MCF 10A (cell line): ENCODE measurements at regions of chr12 and their contacts with region 1.

Region 1: GRCh38 chr12:131737142-131737827 is 26.4 kb downstream of the SFSWAP start:
- DNase-seq: peak; percentile 81
- H3K4me3 Mint-ChIP-seq: peak overlapping the region; percentile 61
- H3K27ac Mint-ChIP-seq: peak overlapping the region; percentile 65
- H3K4me1 Mint-ChIP-seq: peaks cover 10% of the 10 kb centered on the region
- H3K27me3 Mint-ChIP-seq: no peaks in the 10 kb centered on the region
- CTCF ChIP-seq: no peak

Region 2: GRCh38 chr12:131628025-131628875 is 109.0 kb before region 1 on chr12:
- CTCF ChIA-PET with region 1: no interaction called
- POLR2A ChIA-PET with region 1: no interaction called
- intact Hi-C with region 1: no loop called
- DNase-seq: no peak
- H3K4me3 Mint-ChIP-seq: no peak overlapping the region
- H3K27ac Mint-ChIP-seq: no peak overlapping the region
- H3K4me1 Mint-ChIP-seq: peaks cover 5% of the 10 kb centered on the region
- H3K27me3 Mint-ChIP-seq: peaks cover 23% of the 10 kb centered on the region
- CTCF ChIP-seq: no peak

Region 3: GRCh38 chr12:131710464-131711457 is 26.5 kb before region 1 on chr12 and contains the start of gene SFSWAP:
- CTCF ChIA-PET with region 1: no interaction called
- POLR2A ChIA-PET with region 1: interaction called, 14 read pairs
- intact Hi-C with region 1: no loop called
- DNase-seq: peak; percentile 67
- H3K4me3 Mint-ChIP-seq: peak within 1 kb of the TSS; percentile 90
- H3K27ac Mint-ChIP-seq: peak within 1 kb of the TSS; percentile 100
- H3K4me1 Mint-ChIP-seq: peaks cover 5% of the 10 kb centered on the region
- H3K27me3 Mint-ChIP-seq: no peaks in the 10 kb centered on the region
- CTCF ChIP-seq: no peak
- total RNA-seq, gene SFSWAP: 68.2 and 68.8 TPM in 2 replicates

Region 4: DNA sequence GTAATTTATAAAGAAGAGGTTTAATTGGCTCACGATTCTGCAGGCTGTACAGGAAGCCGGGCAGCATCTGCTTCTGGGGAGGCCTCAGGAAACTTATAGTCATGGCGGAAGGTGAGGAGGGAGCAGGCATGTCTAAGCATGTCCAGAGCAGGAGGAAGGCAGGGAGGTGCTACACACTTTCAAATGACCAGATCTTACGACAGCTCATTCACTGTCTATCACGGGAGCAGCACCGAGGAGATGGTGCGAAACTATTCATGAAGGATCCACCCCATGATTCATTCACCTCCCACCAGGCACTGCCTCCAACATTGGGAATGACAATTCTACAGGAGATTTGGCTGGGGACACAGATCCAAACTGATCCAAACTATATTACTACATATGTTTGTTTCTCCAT is 16.4 kb before region 1 on chr12:
- CTCF ChIA-PET with region 1: no interaction called
- POLR2A ChIA-PET with region 1: interaction called, 15 read pairs
- intact Hi-C with region 1: no loop called
- DNase-seq: peak; percentile 74
- H3K4me3 Mint-ChIP-seq: peak overlapping the region; percentile 24
- H3K27ac Mint-ChIP-seq: peak overlapping the region; percentile 98
- H3K4me1 Mint-ChIP-seq: peaks cover 14% of the 10 kb centered on the region
- H3K27me3 Mint-ChIP-seq: no peaks in the 10 kb centered on the region
- CTCF ChIP-seq: no peak